B cell (primary cell): ENCODE measurements at regions of chr1 and their contacts with region 1.

Region 1: DNA sequence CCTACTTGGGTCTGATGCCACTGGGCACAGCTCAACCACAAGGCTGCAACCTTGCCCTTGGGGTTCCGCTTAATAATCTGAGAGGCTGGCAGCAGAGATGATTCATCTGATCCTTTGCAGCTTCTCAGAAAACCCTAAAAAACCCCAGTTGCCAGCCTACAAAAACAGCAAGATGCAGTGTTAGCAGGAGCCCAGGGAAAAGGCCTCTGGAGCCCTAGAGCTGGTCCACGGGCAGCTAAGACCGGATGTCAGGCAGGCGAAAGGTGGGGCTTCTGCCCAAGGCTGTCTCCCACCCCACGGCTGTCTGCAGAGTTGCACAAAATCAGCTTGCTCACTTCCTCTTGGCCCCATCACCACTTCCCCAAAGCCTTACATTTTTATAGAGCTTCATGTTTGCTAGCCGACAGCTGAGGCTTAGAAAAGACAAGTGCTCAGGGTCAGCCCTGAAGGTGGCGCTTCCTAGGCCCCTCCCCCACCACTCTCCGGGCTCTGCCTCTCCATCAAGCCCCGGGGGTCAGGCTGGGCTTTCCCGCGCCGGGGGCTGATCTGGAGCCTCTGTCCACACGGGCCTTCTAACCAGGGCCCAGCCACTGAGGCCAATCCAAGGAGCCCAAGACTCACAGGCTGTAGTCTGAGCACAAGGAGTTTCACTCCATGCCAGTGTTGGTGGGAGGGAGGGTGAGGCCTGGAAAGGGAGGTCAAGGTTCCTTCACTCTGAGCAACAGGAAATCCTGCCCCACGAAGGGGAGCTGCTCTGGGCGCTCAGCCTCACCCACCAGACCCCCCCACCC is 4.2 kb upstream of the ADORA3 start:
- DNase-seq: peak; percentile 90
- ATAC-seq: peak; percentile 70
- H3K4me3 ChIP-seq: peak overlapping the region; percentile 12 to 62 (median 59)
- H3K4me3 Mint-ChIP-seq: peak overlapping the region; percentile 79
- H3K27ac ChIP-seq: peak overlapping the region; percentile 88 to 98
- H3K27ac Mint-ChIP-seq: peak overlapping the region; percentile 95
- H3K4me1 ChIP-seq: peaks cover 64 to 69% of the 10 kb centered on the region in 2 donors
- H3K4me1 Mint-ChIP-seq: peaks cover 57% of the 10 kb centered on the region
- H3K27me3 ChIP-seq: no peaks in the 10 kb centered on the region
- H3K27me3 Mint-ChIP-seq: no peaks in the 10 kb centered on the region
- CTCF ChIP-seq: no peak

Region 2: DNA sequence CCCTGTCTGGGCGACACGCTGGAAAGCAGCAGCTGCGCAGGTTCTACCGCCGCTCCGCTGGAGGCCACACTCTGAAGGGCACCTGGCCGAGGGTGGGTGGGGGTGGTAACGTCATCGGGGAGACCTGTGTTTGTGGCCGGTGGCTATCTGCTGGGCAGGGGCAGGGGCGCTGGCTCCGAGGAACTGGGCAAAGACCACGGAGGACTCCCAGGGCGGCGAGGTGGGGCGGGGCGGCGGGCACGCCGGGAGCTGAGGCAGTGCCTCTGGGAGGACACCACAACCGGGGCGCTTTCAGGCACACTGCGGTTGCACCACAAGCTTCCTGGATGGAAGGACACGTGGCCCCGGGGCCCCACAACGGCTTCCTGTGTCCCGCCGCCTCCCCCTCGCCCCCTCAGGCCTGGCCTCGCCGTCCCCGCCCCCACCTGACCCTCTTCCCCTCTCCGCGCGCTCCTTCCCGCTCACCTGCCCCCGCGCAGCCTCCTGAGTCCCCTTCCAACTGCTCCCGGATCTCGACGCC is 303.9 kb before region 1 on chr1:
- CTCF ChIA-PET with region 1: interaction called, 3 read pairs
- POLR2A ChIA-PET with region 1: interaction called, 5 read pairs
- intact Hi-C with region 1: loop called (anchors 1 kb)
- DNase-seq: peak; percentile 90
- ATAC-seq: peak; percentile 56
- H3K4me3 ChIP-seq: peak overlapping the region; percentile 60 to 87 (median 83)
- H3K4me3 Mint-ChIP-seq: peak overlapping the region; percentile 91
- H3K27ac ChIP-seq: peak overlapping the region; percentile 88 to 96
- H3K27ac Mint-ChIP-seq: peak overlapping the region; percentile 96
- H3K4me1 ChIP-seq: peaks cover 58 to 75% of the 10 kb centered on the region in 2 donors
- H3K4me1 Mint-ChIP-seq: peaks cover 81% of the 10 kb centered on the region
- H3K27me3 ChIP-seq: no peaks in the 10 kb centered on the region
- H3K27me3 Mint-ChIP-seq: no peaks in the 10 kb centered on the region
- CTCF ChIP-seq: no peak

Region 3: DNA sequence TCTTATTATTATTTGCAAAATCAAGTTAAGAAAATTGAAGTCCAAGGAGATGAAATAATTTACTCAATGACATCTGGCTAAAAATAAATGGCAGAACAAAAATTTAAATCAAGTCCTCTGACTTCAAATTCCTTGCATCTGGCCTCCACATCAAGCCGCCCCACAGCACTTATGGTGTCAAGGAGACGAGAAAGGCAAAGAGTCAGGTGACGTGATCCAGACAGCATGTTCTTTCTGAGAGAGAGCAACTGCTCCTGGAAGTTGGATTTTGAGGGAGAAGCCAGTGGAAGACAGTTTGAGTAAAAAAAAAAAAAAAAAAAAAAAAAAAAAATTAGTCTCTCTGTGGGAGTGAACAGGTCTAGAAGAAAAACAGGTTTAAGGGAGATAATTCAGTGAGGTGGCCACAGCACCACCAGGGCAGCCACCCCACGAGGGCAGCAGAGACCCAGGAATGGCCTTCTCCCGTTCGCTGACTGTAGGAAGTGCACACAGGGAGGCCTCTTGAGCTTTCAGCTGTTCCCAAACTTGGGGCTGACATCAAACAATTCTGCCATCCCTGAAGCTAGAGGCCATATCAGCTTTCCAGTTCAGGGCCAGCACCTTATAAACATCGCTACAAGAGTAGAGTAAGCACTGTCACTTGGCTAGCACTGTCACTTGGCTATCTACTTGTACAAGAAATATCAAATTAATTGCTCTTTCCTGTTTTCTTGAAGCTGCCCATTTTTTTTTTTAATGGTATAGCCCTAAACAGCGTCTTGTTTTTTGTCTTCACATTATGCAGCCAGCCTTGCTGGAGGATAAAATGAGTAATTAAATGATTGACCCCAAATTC is 26.0 kb before region 1 on chr1:
- CTCF ChIA-PET with region 1: interaction called, 276 read pairs
- POLR2A ChIA-PET with region 1: interaction called, 11 read pairs
- intact Hi-C with region 1: loop called (anchors 1 kb)
- DNase-seq: peak; percentile 76
- ATAC-seq: peak; percentile 52
- H3K4me3 ChIP-seq: no peak overlapping the region
- H3K4me3 Mint-ChIP-seq: no peak overlapping the region
- H3K27ac ChIP-seq: no peak overlapping the region
- H3K27ac Mint-ChIP-seq: peak overlapping the region; percentile 43
- H3K4me1 ChIP-seq: peaks cover 38 to 42% of the 10 kb centered on the region in 2 donors
- H3K4me1 Mint-ChIP-seq: peaks cover 46% of the 10 kb centered on the region
- H3K27me3 ChIP-seq: no peaks in the 10 kb centered on the region
- H3K27me3 Mint-ChIP-seq: no peaks in the 10 kb centered on the region
- CTCF ChIP-seq: peak; percentile 55

Region 4: GRCh38 chr1:111592389-111593361 is 85.1 kb after region 1 on chr1:
- CTCF ChIA-PET with region 1: interaction called, 40 read pairs
- POLR2A ChIA-PET with region 1: interaction called, 10 read pairs
- intact Hi-C with region 1: loop called (anchors 1 kb)
- DNase-seq: peak; percentile 76
- ATAC-seq: peak; percentile 95
- H3K4me3 ChIP-seq: peak overlapping the region in 2 of 5 experiments; percentile 8 to 44
- H3K4me3 Mint-ChIP-seq: peak overlapping the region; percentile 66
- H3K27ac ChIP-seq: peak overlapping the region; percentile 63 to 70
- H3K27ac Mint-ChIP-seq: peak overlapping the region; percentile 83
- H3K4me1 ChIP-seq: peaks cover 60 to 63% of the 10 kb centered on the region in 2 donors
- H3K4me1 Mint-ChIP-seq: peaks cover 51% of the 10 kb centered on the region
- H3K27me3 ChIP-seq: no peaks in the 10 kb centered on the region
- H3K27me3 Mint-ChIP-seq: no peaks in the 10 kb centered on the region
- CTCF ChIP-seq: no peak

Region 5: DNA sequence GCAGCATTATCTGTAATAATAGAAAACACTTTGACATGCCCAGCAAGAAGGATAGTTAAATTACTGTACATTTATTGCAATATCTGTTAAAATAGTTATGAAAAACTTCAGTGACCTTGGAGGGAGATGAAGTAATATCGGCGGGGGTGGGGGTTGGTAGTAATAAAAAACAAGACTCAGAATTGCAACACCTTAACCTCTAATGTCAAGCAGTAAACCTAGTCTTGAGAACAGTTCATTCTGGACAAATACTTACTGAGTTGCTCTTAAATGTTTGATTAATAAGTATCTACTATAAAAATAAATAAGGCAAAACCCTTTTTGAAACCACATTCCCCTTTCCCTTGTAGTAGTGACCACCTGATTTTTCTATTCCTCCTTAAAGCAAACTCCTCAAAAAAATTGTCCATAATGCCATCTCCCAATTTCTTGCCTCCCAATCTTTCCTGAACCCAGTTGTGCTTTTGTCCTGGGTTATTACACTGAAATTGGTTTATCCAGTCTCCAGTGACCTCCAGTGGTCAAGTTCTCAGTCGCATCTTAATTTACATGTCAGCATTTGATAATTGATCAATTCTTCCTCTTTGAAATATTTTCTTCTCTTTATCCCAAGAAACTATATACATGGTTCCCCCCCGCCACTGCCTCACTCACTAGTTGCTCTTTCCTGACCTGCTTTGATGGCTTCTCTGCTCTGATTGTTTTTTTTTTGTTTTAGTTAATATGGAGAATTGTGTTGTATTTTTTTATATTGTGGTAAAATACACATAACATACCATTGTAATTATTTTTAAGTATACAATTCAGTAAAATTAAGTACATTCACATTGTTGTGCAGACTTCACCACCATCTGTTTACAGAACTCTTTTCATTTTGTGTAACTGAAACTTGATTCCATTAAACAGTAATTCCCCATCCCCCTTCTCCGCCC is 148.7 kb after region 1 on chr1:
- CTCF ChIA-PET with region 1: interaction called, 27 read pairs
- POLR2A ChIA-PET with region 1: no interaction called
- intact Hi-C with region 1: loop called (anchors 1 kb)
- DNase-seq: peak; percentile 66
- ATAC-seq: no peak
- H3K4me3 ChIP-seq: no peak overlapping the region
- H3K4me3 Mint-ChIP-seq: no peak overlapping the region
- H3K27ac ChIP-seq: no peak overlapping the region
- H3K27ac Mint-ChIP-seq: no peak overlapping the region
- H3K4me1 ChIP-seq: peaks cover 30 to 33% of the 10 kb centered on the region in 2 donors
- H3K4me1 Mint-ChIP-seq: peaks cover 37% of the 10 kb centered on the region
- H3K27me3 ChIP-seq: no peaks in the 10 kb centered on the region
- H3K27me3 Mint-ChIP-seq: no peaks in the 10 kb centered on the region
- CTCF ChIP-seq: peak; percentile 75

Region 6: DNA sequence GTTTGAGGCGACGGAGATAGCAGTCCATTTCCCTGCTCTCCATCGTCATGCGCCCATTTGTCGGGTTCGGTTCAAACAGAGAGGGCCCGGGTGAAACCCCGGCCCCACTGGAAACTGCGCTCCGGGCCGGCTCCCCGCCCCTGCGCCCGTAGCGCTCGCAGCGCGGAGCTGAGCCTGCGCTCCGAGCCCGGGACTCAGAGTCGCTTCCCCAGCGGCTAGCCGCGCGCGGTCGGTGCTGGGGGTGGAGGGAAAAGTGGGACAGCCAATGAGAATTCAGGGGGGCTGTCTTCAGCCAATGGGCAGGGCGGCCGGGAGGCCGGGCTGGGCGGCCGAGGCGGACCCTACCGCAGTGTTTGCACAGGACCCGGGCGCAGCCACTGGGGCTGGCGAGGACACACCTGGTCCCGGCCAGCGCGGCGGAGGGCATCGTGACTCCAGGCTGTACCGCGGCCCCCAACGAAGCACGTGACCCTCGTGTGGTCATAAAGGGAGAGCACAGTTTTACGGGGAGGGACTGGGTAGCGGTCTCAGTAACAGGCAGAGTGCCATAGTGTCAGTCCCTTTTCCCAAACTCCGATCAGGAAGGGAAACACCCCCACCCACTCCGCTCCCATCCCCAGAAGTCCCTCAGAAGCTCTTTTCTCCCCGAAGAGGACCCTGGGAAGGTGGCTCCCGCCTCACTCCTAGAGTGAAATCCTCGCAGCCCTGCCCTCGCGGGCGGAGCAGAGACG is 231.8 kb after region 1 on chr1 and contains the start of gene INKA2:
- CTCF ChIA-PET with region 1: interaction called, 9 read pairs
- POLR2A ChIA-PET with region 1: interaction called, 3 read pairs
- intact Hi-C with region 1: loop called (anchors 2 kb)
- DNase-seq: peak; percentile 89
- ATAC-seq: peak; percentile 75
- H3K4me3 ChIP-seq: peak within 1 kb of the TSS; percentile 67 to 81 (median 72)
- H3K4me3 Mint-ChIP-seq: peak within 1 kb of the TSS; percentile 97
- H3K27ac ChIP-seq: peak within 1 kb of the TSS; percentile 60 to 73
- H3K27ac Mint-ChIP-seq: peak within 1 kb of the TSS; percentile 91
- H3K4me1 ChIP-seq: peaks cover 15 to 25% of the 10 kb centered on the region in 2 donors
- H3K4me1 Mint-ChIP-seq: peaks cover 23% of the 10 kb centered on the region
- H3K27me3 ChIP-seq: peaks cover 0 to 39% (median 15%) of the 10 kb centered on the region in 4 experiments
- H3K27me3 Mint-ChIP-seq: peaks cover 6% of the 10 kb centered on the region
- CTCF ChIP-seq: no peak
- total RNA-seq, gene INKA2: 6.4 and 6.5 TPM in 2 replicates